ENCODE measurements at regions of chr11 and their contacts with region 1.

Region 1: DNA sequence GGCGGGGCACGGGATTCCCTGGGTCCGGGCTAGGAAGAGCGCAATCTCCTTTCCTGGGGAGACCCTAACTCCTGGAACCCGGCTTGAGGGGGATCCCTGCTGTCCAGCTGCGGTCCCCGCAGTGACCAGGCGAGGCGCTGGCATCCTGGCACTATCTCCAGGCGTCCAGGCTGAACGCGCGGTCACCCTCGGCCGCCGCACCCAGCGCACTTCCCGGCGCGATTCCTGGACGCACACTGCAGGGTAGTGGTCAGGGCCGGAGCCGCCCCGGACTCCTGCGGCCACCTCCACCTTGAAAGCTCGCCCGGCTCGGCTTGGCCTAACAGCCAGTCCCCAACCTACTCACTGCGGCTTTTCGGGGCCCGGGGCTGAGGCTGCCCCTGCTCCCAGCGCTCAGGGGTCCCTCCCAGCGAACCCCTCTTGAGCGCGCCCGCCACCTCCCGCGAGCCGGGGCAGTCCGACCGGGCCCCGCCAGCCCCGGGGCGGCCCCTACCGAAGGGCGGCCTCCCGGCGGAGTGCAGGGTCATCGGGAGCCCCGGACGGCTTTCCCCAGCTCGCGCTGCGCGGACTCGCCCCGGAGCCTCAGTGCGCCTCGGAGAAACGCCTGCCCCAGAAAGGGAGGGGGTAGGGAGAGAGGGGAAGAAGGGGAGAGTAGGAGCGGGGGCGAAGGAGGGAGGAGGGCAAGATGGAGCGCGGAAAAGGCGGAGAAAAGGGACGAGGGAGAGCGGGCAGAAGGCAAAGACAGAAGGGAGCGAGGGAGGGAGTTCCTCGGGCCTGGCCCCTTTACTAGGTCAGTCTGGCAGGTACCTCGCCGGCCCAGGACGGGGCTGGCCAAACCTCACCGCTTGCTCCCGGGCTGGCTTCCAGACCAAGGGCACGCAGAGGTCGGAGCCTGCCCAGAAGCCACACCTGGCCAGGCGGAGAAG is 1.0 kb downstream of the POU2AF3 start:
- DNase-seq: peak; percentile 85
- H3K4me3 ChIP-seq: peak overlapping the region; percentile 55 to 66 (median 61)
- H3K27ac ChIP-seq: peak overlapping the region; percentile 90 to 95 (median 91)
- H3K4me1 ChIP-seq: peaks cover 44 to 49% of the 10 kb centered on the region in 2 donors
- H3K27me3 ChIP-seq: no peaks in the 10 kb centered on the region
- CTCF ChIP-seq: peak; percentile 63 to 87 (median 77)
- POLR2A ChIP-seq: peak in 1 of 2 donors; percentile 71

Region 2: DNA sequence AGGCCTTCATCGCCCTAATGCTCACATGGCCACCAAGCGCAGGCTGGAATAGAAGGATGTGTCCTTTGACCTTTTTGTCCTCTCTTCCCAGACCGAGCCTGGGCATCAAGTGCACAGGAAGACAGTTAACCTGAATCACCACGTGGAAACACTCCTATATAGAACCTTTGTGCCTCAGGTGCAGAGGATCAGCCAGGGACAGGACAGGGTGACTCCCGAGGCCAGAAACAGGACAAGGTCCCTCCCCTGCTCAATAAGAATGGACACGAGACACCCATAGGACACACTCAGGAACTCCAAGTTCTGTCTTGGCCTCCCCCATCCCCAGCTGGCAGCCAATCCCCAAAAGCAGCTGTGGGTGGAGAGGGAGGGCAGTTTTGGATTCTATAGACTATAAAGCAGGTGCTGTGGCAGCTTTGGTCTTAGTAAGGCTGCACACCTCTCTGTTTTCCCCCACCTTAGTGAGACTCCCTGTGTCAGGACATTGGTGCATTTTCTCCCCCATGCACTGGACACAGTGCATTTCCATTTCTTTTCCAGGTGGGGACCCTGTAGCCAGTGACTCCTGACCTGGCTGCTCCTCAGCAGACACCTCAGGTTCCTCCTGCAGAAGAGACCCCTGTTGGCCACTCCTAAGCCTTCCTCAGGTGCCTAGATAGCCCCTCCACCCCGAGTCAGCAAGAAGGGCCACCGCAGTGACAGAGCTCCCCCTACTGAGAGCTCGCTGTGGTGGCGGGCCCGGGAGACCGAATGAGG is 123.3 kb after region 1 on chr11:
- intact Hi-C with region 1: loop called (anchors 5 kb)
- DNase-seq: peak; percentile 72 to 78
- H3K4me3 ChIP-seq: no peak overlapping the region
- H3K27ac ChIP-seq: no peak overlapping the region
- H3K4me1 ChIP-seq: peaks cover 19 to 36% of the 10 kb centered on the region in 2 donors
- H3K27me3 ChIP-seq: no peaks in the 10 kb centered on the region
- CTCF ChIP-seq: peak; percentile 43 to 89 (median 82)
- POLR2A ChIP-seq: no peak

Region 3: GRCh38 chr11:111429066-111429506 is 129.7 kb after region 1 on chr11:
- intact Hi-C with region 1: loop called (anchors 5 kb)
- DNase-seq: peak; percentile 36 to 53
- H3K4me3 ChIP-seq: no peak overlapping the region
- H3K27ac ChIP-seq: no peak overlapping the region
- H3K4me1 ChIP-seq: peaks cover 0 to 14% of the 10 kb centered on the region in 2 donors
- H3K27me3 ChIP-seq: no peaks in the 10 kb centered on the region
- CTCF ChIP-seq: peak in 4 of 6 experiments; percentile 21 to 62 (median 52)
- POLR2A ChIP-seq: no peak